ENCODE measurements at regions of chr6 and their contacts with region 1.

Region 1: DNA sequence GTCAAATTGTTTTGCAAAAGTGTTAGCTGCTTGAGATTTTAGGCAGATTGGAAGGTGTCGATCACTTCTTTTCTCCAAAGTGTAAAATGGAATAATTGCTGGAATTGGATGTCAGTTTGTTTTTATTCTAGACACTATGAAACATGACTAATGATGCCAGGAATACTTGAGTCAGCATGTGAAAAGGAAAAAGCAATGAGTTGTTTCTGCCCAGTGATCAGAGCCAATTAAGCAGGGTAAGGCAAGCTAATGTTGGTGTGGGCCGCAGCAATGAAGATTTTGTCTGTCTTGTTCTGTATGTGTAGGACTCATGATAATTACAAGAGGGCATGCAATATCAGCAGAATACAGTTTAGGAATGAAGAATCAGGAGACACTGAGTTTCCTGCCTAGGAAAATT is 110.3 kb downstream of the CARMIL1 start:
- DNase-seq: no peak
- ATAC-seq: peak; percentile 19; the same call in 1 of the 3 replicates
- H3K4me3 ChIP-seq: no peak overlapping the region
- H3K27ac ChIP-seq: no peak overlapping the region
- H3K4me1 ChIP-seq: peaks cover 11% of the 10 kb centered on the region
- H3K27me3 ChIP-seq: no peaks in the 10 kb centered on the region
- CTCF ChIP-seq: no peak
- EP300 ChIP-seq: no peak
- POLR2A ChIP-seq: no peak
- RAD21 ChIP-seq: no peak

Region 2: DNA sequence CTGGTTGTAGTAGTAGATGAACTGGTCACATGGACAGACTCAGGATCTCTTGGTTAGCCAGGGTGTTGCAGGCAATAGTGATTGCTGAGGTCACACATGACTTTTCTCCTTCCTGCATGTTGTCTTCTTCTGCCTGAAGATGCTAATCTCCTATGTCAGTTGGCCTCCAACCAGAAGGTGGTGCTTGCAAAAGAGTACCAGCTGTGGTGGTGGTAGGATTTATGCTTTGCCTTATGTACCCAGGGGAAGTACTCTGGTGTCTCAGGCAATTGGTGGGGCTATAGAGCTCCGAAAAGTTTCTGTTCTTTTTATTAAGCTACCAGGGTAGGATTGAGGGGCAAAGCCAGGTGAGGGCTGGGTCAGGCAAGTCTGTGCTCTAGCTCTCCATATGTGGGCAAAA is 11.8 kb before region 1 on chr6:
- CTCF ChIA-PET with region 1: interaction called, 5 read pairs
- POLR2A ChIA-PET with region 1: interaction called, 5 read pairs
- RAD21 ChIA-PET with region 1: interaction called, 5 read pairs
- SMC1A ChIA-PET with region 1: interaction called, 10 read pairs
- in situ Hi-C with region 1: no loop called
- intact Hi-C with region 1: loop called (anchors 2 kb)
- DNase-seq: no peak
- ATAC-seq: peak; percentile 55
- H3K4me3 ChIP-seq: no peak overlapping the region
- H3K27ac ChIP-seq: no peak overlapping the region
- H3K4me1 ChIP-seq: peaks cover 4% of the 10 kb centered on the region; the same call in 1 of the 2 replicates
- H3K27me3 ChIP-seq: no peaks in the 10 kb centered on the region
- CTCF ChIP-seq: no peak
- EP300 ChIP-seq: no peak
- POLR2A ChIP-seq: no peak
- RAD21 ChIP-seq: no peak

Measured in GM12878 (cell line).